GM13976 (cell line): ENCODE measurements at regions of chr6 and their contacts with region 1.

Region 1: DNA sequence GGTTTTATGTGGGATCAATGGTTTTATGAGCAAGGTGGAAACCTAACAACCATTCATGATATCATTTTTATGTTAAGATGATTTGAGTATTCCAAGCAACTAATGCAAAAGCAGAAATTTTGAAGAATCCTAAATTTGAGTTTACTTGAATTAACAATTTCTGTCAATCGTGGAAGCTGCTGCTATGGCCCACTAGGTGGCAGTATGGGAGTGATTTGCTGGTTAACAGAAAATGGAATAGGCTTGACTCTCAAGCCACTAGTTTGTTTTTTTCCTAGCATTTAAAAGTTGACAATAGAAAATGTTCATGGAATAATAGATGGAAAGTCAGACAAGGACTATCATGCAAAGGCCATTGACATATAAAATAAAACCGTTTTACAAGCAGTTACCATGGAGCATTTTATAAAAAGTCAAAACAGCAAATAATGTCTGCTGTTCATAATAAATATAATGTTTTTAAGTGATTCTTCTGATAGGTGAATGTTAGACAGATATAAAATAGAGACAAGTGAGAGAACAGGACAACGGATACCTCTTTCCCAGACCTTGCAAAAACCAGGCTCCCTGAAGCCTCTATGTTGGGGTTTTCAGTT is 43.0 kb upstream of the TMEM200A start:
- DNase-seq: peak; percentile 19
- CTCF ChIP-seq: peak; percentile 75

Region 2: DNA sequence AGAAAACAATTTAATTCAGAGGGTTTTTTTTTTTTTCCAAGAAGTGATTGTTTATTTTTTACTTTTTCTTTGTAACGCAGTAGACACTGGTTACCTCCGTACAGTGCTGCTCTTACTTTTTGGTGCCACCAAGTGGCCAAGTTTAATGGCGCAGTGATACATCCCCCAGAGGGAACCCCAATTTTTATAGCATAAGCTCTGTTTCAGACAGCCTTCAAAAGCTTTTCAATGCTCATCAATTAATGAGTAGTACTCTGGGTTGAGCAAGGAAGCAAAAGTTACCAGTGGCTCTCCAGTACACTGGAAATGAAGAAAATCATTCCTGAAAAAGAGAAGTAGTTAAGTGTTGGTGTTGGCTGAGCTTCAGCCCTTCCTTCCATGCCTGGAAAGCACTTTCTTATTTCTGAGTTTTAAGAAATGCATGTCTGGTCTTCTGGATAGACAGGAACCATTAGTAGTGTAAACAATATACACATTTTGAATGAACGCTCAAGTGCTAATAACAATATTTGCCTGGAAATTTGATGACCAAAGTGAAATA is 375.3 kb after region 1 on chr6:
- in situ Hi-C with region 1: loop called (anchors 5 kb)
- DNase-seq: peak; percentile 52
- CTCF ChIP-seq: peak; percentile 62

Region 3: DNA sequence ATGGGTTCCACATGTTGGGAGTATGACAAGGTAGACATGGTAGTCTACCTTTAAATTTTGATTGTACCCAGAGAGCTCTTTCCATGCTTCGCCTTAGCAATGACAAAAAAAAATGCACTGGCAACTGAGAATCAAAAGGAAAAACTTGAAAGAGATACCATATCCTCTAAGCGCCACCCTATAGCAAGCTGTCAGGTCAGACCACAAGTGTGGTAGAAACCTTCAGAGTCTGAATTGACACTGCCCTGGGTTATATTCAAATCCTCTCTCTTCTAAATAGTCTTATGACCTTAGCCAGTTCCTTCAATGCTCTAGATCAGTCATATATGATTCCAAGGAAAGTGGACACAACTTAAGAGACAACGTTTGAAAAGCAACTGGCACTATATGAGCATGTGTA is 458.8 kb after region 1 on chr6:
- in situ Hi-C with region 1: no loop called
- DNase-seq: no peak
- CTCF ChIP-seq: no peak

Region 4: DNA sequence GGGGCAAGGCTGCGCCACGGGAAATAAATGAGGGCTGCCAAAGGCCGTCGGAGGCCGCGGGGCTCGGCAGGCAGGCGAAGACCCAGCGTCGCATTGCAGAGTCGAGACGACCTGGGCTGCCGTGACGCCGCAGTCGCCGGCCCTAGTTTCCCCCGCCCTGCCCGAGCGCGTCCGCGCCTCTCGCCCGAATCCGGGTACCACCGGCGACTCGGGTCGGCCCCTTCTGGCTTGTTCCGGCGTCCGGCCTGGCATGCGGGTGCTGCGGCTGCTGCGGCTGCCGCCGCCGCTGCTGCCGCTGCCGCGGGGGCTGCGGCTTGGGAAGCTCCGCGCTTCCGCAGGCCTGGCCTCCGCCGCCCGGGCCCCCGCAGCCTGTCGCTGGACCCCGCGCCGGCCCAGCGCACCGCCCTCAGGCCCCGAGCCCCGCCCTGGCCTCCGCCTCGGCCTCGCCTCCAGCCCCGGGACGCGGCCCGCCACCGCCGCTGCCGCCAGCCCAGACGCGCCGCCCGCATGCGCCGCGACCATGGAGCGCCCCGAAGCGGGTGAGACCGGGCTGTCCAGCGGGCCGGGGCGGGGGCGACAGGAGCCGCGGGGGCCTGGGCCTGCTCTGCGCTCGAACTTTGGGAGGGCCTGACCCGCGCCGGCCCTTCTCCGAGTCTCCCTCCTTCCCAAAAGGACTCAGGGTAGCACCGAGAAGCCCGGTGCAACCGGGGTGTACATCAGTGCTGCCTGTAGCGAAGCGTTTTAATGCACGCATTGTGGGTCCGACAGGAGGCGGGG is 812.7 kb after region 1 on chr6 and contains the start of gene AKAP7:
- in situ Hi-C with region 1: loop called (anchors 25 kb)
- DNase-seq: peak; percentile 85
- CTCF ChIP-seq: no peak